PC-9 (cell line): ENCODE measurements at regions of chr5 and their contacts with region 1.

Region 1: DNA sequence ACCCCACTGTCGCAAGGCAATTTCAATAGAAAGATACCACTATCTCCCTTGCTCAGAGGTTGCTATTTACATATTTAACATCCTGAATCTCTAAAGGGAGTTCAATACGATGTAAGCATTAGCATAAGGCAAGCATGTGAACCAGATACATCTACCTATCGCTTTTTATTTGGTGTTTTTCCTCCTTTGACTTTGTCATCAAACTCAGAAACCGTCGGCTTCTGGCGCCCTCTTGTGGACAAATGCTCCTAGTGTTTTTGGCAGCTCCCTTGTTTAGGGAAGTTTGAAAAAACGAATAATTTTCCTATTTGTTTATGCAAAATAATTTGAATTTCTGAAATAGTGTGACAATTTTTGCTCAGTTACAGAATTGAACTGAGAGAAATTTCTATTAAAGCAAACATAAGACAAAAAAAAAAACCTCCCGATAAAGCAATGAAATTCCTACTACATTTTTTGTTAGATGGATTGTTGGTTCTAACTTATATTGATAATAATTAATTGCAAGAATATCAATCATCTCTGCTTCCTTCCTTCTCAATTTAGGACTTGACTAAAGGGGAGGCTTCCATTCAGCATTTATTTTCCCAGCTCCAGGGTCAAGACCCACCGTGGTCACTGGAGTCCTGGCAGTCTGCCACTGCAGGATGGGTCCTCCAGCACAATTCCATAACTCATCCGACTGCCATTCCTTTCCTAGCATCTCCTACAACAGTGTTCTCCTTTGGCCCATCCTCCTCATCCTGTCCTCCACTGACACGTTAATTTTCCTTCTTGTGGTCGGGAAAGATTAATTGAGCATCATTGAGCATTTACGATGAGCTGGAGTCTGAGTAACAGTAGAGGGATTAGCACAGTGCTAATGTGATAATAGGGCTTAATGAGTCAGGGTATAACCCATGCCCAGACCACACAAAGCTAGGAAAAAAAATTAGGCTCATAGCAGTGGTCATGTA is 131.8 kb upstream of the CHD1 start:
- DNase-seq: peak; percentile 58 to 71
- H3K4me3 ChIP-seq: no peak overlapping the region
- H3K27ac ChIP-seq: no peak overlapping the region
- H3K4me1 ChIP-seq: peaks cover 15% of the 10 kb centered on the region
- H3K27me3 ChIP-seq: no peaks in the 10 kb centered on the region
- CTCF ChIP-seq: peak; percentile 92

Region 2: DNA sequence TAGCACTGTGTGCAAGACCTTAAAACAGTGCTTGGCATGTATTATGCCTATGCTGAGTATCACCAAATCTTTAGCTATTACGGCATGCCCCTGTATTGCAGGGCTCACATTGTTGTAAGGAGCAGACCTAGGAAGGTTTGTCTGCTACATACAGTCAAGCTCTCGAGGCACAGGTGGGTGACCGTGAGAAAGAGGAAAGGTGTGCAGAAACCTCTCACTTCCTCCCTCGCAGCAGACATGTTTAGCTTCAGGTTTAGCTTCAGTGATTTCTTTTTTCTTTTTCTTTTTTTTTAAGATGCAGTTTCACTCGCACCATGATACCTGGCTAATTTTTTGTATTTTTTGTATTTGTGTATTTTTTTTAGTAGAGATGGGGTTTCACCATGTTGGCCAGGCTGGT is 1601.7 kb before region 1 on chr5:
- CTCF ChIA-PET with region 1: no interaction called
- POLR2A ChIA-PET with region 1: no interaction called
- intact Hi-C with region 1: no loop called
- DNase-seq: no peak
- H3K4me3 ChIP-seq: no peak overlapping the region
- H3K27ac ChIP-seq: no peak overlapping the region
- H3K4me1 ChIP-seq: no peaks in the 10 kb centered on the region
- H3K27me3 ChIP-seq: no peaks in the 10 kb centered on the region
- CTCF ChIP-seq: no peak

Region 3: GRCh38 chr5:98905857-98906690 is 154.5 kb before region 1 on chr5:
- CTCF ChIA-PET with region 1: interaction called, 3 read pairs
- POLR2A ChIA-PET with region 1: no interaction called
- intact Hi-C with region 1: loop called (anchors 1 kb)
- DNase-seq: no peak
- H3K4me3 ChIP-seq: no peak overlapping the region
- H3K27ac ChIP-seq: no peak overlapping the region
- H3K4me1 ChIP-seq: 0 out of 2 replicates have a peak, but pooled peaks cover 6% of the 10 kb centered on the region
- H3K27me3 ChIP-seq: no peaks in the 10 kb centered on the region
- CTCF ChIP-seq: peak; percentile 90